ENCODE measurements at regions of chr20 and their contacts with region 1.

Region 1: GRCh38 chr20:45436732-45437391 is 20.9 kb downstream of the PIGT start:
- DNase-seq: peak; percentile 89
- ATAC-seq: peak; percentile 93
- H3K4me3 ChIP-seq: peak overlapping the region; percentile 32 to 81 (median 57)
- H3K4me3 Mint-ChIP-seq: peak overlapping the region; percentile 90
- H3K27ac ChIP-seq: peak overlapping the region in 1 of 2 donors; percentile 53
- H3K27ac Mint-ChIP-seq: peak overlapping the region; percentile 86
- H3K4me1 ChIP-seq: peaks cover 30 to 33% of the 10 kb centered on the region in 2 donors
- H3K4me1 Mint-ChIP-seq: peaks cover 32% of the 10 kb centered on the region
- H3K27me3 ChIP-seq: no peaks in the 10 kb centered on the region
- H3K27me3 Mint-ChIP-seq: no peaks in the 10 kb centered on the region
- CTCF ChIP-seq: peak; percentile 93

Region 2: GRCh38 chr20:45293041-45294002 is 143.5 kb before region 1 on chr20:
- CTCF ChIA-PET with region 1: interaction called, 10 read pairs
- POLR2A ChIA-PET with region 1: no interaction called
- intact Hi-C with region 1: no loop called
- DNase-seq: peak; percentile 85
- ATAC-seq: peak; percentile 86
- H3K4me3 ChIP-seq: peak overlapping the region in 4 of 5 experiments; percentile 39 to 65 (median 60)
- H3K4me3 Mint-ChIP-seq: peak overlapping the region; percentile 87
- H3K27ac ChIP-seq: no peak overlapping the region
- H3K27ac Mint-ChIP-seq: no peak overlapping the region
- H3K4me1 ChIP-seq: peaks cover 13 to 21% of the 10 kb centered on the region in 2 donors
- H3K4me1 Mint-ChIP-seq: peaks cover 18% of the 10 kb centered on the region
- H3K27me3 ChIP-seq: peaks cover 0 to 42% (median 20%) of the 10 kb centered on the region in 4 experiments
- H3K27me3 Mint-ChIP-seq: peaks cover 41% of the 10 kb centered on the region
- CTCF ChIP-seq: peak; percentile 96

Region 3: DNA sequence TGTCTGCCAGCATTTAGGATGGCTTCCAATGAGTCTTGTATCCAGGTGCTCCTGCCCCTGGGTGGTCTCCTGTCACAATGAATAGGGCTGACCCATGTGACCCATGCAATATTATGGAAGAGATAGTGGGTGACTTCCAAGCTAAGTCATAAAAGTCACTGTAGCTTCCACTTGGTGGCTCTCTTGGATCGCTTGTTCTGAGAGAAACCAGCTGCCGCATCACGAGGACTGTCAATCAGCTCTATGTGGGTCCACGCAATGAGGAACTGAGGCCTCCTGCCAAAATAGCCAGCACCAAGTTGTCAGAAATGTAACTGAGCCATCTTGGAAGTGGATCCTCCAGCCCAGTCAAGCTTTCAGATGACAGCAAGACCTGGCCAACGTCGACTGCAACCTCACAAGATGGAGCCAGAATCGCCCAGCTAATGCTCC is 113.9 kb before region 1 on chr20:
- CTCF ChIA-PET with region 1: interaction called, 69 read pairs
- POLR2A ChIA-PET with region 1: interaction called, 7 read pairs
- intact Hi-C with region 1: loop called (anchors 2 kb)
- DNase-seq: peak; percentile 70
- ATAC-seq: peak; percentile 23
- H3K4me3 ChIP-seq: no peak overlapping the region
- H3K4me3 Mint-ChIP-seq: no peak overlapping the region
- H3K27ac ChIP-seq: no peak overlapping the region
- H3K27ac Mint-ChIP-seq: peak overlapping the region; percentile 15
- H3K4me1 ChIP-seq: peaks cover 28 to 41% of the 10 kb centered on the region in 2 donors
- H3K4me1 Mint-ChIP-seq: peaks cover 23% of the 10 kb centered on the region
- H3K27me3 ChIP-seq: peaks cover 0 to 3% (median 0%) of the 10 kb centered on the region in 4 experiments
- H3K27me3 Mint-ChIP-seq: no peaks in the 10 kb centered on the region
- CTCF ChIP-seq: no peak

Region 4: GRCh38 chr20:45362804-45363610 is 73.9 kb before region 1 on chr20 and contains the start of gene SYS1:
- CTCF ChIA-PET with region 1: interaction called, 814 read pairs
- POLR2A ChIA-PET with region 1: interaction called, 39 read pairs
- intact Hi-C with region 1: loop called (anchors 1 kb)
- DNase-seq: peak; percentile 99
- ATAC-seq: peak; percentile 82
- H3K4me3 ChIP-seq: peak within 1 kb of the TSS; percentile 79 to 88 (median 85)
- H3K4me3 Mint-ChIP-seq: peak within 1 kb of the TSS; percentile 99
- H3K27ac ChIP-seq: peak within 1 kb of the TSS; percentile 86 to 99
- H3K27ac Mint-ChIP-seq: peak within 1 kb of the TSS; percentile 99
- H3K4me1 ChIP-seq: peaks cover 47 to 49% of the 10 kb centered on the region in 2 donors
- H3K4me1 Mint-ChIP-seq: peaks cover 49% of the 10 kb centered on the region
- H3K27me3 ChIP-seq: peaks cover 0 to 5% (median 0%) of the 10 kb centered on the region in 4 experiments
- H3K27me3 Mint-ChIP-seq: no peaks in the 10 kb centered on the region
- CTCF ChIP-seq: peak; percentile 86
- total RNA-seq, gene SYS1: 57.7 and 61.4 TPM in 2 replicates

Region 5: GRCh38 chr20:45406259-45407066 is 30.4 kb before region 1 on chr20:
- CTCF ChIA-PET with region 1: interaction called, 22 read pairs
- POLR2A ChIA-PET with region 1: interaction called, 7 read pairs
- intact Hi-C with region 1: loop called (anchors 2 kb)
- DNase-seq: peak; percentile 64
- ATAC-seq: peak; percentile 53
- H3K4me3 ChIP-seq: peak overlapping the region; percentile 43 to 70 (median 67)
- H3K4me3 Mint-ChIP-seq: peak overlapping the region; percentile 84
- H3K27ac ChIP-seq: no peak overlapping the region
- H3K27ac Mint-ChIP-seq: peak overlapping the region; percentile 76
- H3K4me1 ChIP-seq: peaks cover 17 to 33% of the 10 kb centered on the region in 2 donors
- H3K4me1 Mint-ChIP-seq: peaks cover 30% of the 10 kb centered on the region
- H3K27me3 ChIP-seq: no peaks in the 10 kb centered on the region
- H3K27me3 Mint-ChIP-seq: peaks cover 6% of the 10 kb centered on the region
- CTCF ChIP-seq: no peak

Region 6: GRCh38 chr20:45450097-45450818 is 13.4 kb after region 1 on chr20:
- CTCF ChIA-PET with region 1: interaction called, 36 read pairs
- POLR2A ChIA-PET with region 1: interaction called, 3 read pairs
- intact Hi-C with region 1: no loop called
- DNase-seq: peak; percentile 75
- ATAC-seq: peak; percentile 57
- H3K4me3 ChIP-seq: no peak overlapping the region
- H3K4me3 Mint-ChIP-seq: no peak overlapping the region
- H3K27ac ChIP-seq: no peak overlapping the region
- H3K27ac Mint-ChIP-seq: no peak overlapping the region
- H3K4me1 ChIP-seq: peaks cover 12 to 16% of the 10 kb centered on the region in 2 donors
- H3K4me1 Mint-ChIP-seq: peaks cover 17% of the 10 kb centered on the region
- H3K27me3 ChIP-seq: peaks cover 0 to 5% (median 0%) of the 10 kb centered on the region in 4 experiments
- H3K27me3 Mint-ChIP-seq: peaks cover 6% of the 10 kb centered on the region
- CTCF ChIP-seq: peak; percentile 75

Region 7: GRCh38 chr20:45545754-45546453 is 109.0 kb after region 1 on chr20:
- CTCF ChIA-PET with region 1: no interaction called
- POLR2A ChIA-PET with region 1: no interaction called
- intact Hi-C with region 1: no loop called
- DNase-seq: no peak
- ATAC-seq: no peak
- H3K4me3 ChIP-seq: no peak overlapping the region
- H3K4me3 Mint-ChIP-seq: no peak overlapping the region
- H3K27ac ChIP-seq: no peak overlapping the region
- H3K27ac Mint-ChIP-seq: no peak overlapping the region
- H3K4me1 ChIP-seq: no peaks in the 10 kb centered on the region
- H3K4me1 Mint-ChIP-seq: no peaks in the 10 kb centered on the region
- H3K27me3 ChIP-seq: peaks cover 0 to 5% (median 3%) of the 10 kb centered on the region in 4 experiments
- H3K27me3 Mint-ChIP-seq: peaks cover 74% of the 10 kb centered on the region
- CTCF ChIP-seq: no peak

Measured in B cell (primary cell).